ENCODE measurements at regions of chr16 and their contacts with region 1.

Region 1: DNA sequence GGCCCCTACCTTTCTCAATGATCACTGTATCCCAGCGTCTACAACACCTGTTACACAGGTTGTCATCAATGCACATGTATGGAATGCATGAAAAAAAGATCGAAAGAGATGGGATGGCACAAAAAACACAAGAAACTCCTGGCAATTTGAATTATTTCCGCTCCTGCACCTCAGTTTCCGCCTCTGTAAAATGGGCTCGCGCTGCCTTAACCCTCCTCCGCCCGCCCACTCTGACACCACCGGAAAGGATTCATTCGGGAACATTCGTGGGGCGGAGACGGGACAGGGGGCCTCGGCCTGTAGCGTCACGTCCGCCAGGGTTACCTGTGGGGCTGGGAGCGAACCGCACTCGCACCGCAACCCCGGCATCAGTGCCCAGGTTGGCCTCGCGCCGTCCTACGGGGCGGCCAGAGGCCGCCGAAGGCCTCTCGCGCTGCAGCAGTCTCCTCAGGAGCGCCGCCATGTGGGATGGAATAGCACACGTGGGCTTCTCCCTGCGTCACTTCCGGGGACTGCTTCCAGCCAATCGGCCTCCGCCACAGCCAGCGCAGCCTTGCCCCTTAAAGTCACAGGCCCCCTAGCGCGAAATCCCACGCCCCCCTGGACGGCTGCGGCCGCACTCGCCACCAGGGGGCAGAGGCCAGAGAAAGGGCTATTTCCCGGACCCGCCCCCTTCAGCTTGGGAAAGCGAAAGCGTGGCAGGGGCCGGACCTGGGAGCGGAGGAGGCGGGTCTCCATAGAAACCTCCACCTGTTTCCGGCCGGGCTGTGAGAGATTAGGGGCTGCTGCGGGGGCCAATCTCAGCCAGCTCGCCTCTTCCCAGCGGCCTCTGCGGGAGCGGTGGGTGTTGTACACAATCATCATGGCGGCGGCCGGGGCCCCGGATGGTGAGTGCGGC is at the starts of genes EARS2 and UBFD1:
- DNase-seq: peak; percentile 99
- H3K4me3 ChIP-seq: peak within 1 kb of the TSS; percentile 70 to 83 (median 76)
- H3K27ac ChIP-seq: peak within 1 kb of the TSS; percentile 65 to 95 (median 85)
- H3K4me1 ChIP-seq: peaks cover 9 to 32% of the 10 kb centered on the region in 2 donors
- H3K27me3 ChIP-seq: no peaks in the 10 kb centered on the region
- CTCF ChIP-seq: peak; percentile 90 to 98 (median 96)
- POLR2A ChIP-seq: peak in 1 of 2 donors; percentile 63
- total RNA-seq, gene EARS2: 20.0 to 85.7 (median 29.5) TPM
- total RNA-seq, gene UBFD1: 58.5 to 151 (median 94.5) TPM

Region 2: DNA sequence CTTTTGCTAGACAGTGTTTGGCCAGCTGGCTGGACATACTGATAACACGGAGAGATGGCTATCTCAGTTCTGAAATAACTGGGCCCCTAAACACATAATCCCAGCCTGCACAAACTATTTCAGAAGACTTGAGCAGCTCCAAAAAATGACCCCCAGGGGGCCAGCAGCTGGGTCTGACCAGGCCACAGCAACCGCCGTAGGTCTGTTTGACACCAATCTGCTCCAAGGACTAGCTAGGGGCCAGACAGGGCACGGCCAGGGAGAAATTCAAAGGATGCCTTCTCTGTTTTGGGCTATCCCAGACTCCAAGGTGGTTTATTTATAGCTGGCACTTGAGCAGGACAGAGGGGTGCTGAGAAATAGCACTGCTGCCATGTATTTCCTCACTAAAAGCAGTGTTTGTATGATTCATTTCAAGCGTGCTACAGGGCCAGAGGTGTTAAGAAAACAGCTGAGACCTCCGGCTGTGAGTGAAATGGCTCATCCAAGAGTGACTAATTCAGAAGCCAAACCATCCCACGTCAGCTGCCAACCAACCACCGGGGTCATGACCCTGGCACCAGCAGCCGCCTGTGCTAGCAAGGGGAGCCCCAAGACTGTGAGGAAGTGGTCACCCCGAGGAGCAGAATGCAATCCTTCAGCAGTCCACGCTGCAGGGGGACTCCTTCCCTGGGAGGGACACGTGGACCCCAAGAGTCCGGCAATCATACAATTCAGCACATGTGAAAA is 52.5 kb before region 1 on chr16:
- intact Hi-C with region 1: loop called in 1 of 2 experiments (anchors 10 kb)
- DNase-seq: peak in 6 of 7 donors; percentile 72 to 85 (median 78)
- H3K4me3 ChIP-seq: no peak overlapping the region
- H3K27ac ChIP-seq: peak overlapping the region in 4 of 5 donors; percentile 20 to 76 (median 58)
- H3K4me1 ChIP-seq: peaks cover 55 to 84% of the 10 kb centered on the region in 2 donors
- H3K27me3 ChIP-seq: no peaks in the 10 kb centered on the region
- CTCF ChIP-seq: no peak
- POLR2A ChIP-seq: no peak

Measured in adrenal gland (tissue), 19 donors.